PC-9 (cell line): ENCODE measurements at regions of chr7 and their contacts with region 1.

Region 1: GRCh38 chr7:142375666-142376313 is 117.9 kb upstream of the PRSS58 start:
- DNase-seq: peak; percentile 99 to 100
- H3K4me3 ChIP-seq: peak overlapping the region; percentile 8; the same call in 1 of the 2 replicates
- H3K27ac ChIP-seq: peak overlapping the region; percentile 87
- H3K4me1 ChIP-seq: peaks cover 54% of the 10 kb centered on the region
- H3K27me3 ChIP-seq: no peaks in the 10 kb centered on the region
- CTCF ChIP-seq: peak; percentile 97

Region 2: GRCh38 chr7:142323706-142324105 is 52.1 kb before region 1 on chr7:
- CTCF ChIA-PET with region 1: interaction called, 7 read pairs
- POLR2A ChIA-PET with region 1: no interaction called
- intact Hi-C with region 1: loop called (anchors 1 kb)
- DNase-seq: peak; percentile 66 to 85
- H3K4me3 ChIP-seq: no peak overlapping the region
- H3K27ac ChIP-seq: no peak overlapping the region
- H3K4me1 ChIP-seq: peaks cover 13% of the 10 kb centered on the region
- H3K27me3 ChIP-seq: no peaks in the 10 kb centered on the region
- CTCF ChIP-seq: peak; percentile 88

Region 3: DNA sequence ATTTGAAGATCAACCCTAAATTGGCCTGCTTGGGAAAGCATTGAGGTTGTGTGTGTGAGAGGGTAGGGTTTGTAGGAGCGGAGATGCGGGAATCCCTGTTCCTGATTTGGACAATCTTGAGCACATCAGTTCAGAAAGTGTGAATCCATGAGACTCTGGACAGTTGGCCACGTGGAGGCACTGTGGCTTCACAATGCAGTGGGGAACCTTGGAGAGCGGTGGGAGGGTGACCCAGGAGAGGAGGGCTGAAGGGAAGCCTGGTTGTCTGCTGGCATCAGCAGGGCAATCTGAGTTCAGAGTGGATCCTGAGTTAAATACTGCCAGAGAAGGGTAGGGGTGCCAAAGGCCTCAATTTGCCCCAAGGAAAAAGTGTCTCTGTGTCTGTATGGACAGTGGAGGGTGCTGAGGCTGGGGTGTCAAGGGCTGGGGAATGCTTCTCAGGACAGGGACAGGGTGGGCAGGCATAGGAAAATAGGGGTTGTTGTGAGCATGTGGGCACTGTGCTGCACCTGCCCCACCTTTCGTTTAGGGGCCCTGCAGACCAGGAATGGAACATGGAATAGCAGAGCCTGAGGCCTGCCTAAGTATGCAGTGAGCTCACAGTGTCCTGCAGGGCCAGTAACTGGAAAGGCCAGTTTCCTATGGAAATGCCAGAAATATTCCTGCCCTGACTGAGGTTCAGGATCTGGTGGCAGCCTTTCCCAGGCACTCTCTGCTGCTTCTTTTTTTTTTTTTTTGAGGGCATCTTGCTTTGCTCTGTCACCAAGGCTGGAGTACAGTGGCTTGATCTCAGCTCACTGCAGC is 45.0 kb after region 1 on chr7:
- CTCF ChIA-PET with region 1: interaction called, 7 read pairs
- POLR2A ChIA-PET with region 1: interaction called, 12 read pairs
- intact Hi-C with region 1: loop called (anchors 1 kb)
- DNase-seq: peak; percentile 74 to 79
- H3K4me3 ChIP-seq: no peak overlapping the region
- H3K27ac ChIP-seq: 0 out of 2 replicates have a peak overlapping the region, but pooled peaks have one; percentile 22
- H3K4me1 ChIP-seq: peaks cover 9% of the 10 kb centered on the region
- H3K27me3 ChIP-seq: no peaks in the 10 kb centered on the region
- CTCF ChIP-seq: peak; percentile 59; the same call in 1 of the 2 replicates

Region 4: DNA sequence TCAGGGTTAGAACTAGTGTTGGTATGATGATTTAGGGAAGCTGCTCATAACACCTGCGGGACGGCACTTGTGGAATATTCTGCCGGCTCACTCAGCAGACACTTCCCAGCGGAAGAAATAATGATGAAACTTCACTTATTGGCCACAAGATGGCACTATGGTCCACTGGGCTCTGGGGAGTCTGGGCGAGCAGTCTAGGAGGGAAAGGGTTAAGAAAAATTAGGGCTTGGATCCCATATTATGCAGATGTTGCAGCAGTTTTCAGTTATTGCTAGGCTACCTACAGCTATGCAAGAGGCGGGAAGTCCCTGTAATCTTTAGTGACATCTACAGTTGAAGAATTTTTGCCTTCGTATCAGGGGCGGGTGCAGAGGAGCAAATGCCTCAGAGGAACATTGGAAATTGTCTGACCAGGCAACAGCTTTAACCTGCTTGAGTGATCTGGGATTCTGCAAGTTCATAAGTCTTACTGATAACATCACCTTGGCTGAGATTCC is 120.8 kb after region 1 on chr7:
- CTCF ChIA-PET with region 1: interaction called, 7 read pairs
- POLR2A ChIA-PET with region 1: no interaction called
- intact Hi-C with region 1: loop called (anchors 1 kb)
- DNase-seq: peak; percentile 84 to 98
- H3K4me3 ChIP-seq: peak overlapping the region; percentile 22; the same call in 1 of the 2 replicates
- H3K27ac ChIP-seq: peak overlapping the region; percentile 74
- H3K4me1 ChIP-seq: peaks cover 51% of the 10 kb centered on the region
- H3K27me3 ChIP-seq: no peaks in the 10 kb centered on the region
- CTCF ChIP-seq: peak; percentile 95

Region 5: DNA sequence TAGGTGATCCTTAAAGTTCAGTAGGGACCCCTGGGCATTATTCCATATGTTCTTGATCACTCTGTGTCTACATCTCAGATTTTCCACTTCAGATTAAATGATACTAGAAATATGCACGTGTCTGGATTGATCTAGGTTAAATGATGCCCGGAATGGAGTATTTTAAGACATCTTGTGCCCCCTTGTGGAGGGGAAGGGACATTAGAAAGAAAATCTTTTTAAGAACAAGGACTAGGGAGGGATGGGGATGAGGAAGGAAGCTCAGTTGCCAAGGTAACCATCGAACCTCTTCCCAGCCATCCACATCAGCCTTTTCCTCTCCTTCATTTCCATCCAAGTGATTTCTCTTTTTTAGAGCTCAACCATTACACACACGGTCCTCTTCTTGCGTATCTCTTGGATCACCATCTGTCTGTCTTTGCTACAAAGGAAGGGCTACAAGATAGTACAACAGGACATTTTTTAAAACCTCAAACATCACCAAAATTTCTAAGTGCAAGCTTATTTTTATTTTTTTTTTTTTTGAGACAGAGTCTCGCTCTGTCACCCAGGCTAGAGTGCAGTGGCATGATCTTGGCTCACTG is 435.5 kb after region 1 on chr7:
- CTCF ChIA-PET with region 1: interaction called, 4 read pairs
- POLR2A ChIA-PET with region 1: no interaction called
- intact Hi-C with region 1: loop called (anchors 1 kb)
- DNase-seq: peak; percentile 22 to 78
- H3K4me3 ChIP-seq: no peak overlapping the region
- H3K27ac ChIP-seq: peak overlapping the region; percentile 96
- H3K4me1 ChIP-seq: peaks cover 84% of the 10 kb centered on the region
- H3K27me3 ChIP-seq: no peaks in the 10 kb centered on the region
- CTCF ChIP-seq: peak; percentile 95

Region 6: DNA sequence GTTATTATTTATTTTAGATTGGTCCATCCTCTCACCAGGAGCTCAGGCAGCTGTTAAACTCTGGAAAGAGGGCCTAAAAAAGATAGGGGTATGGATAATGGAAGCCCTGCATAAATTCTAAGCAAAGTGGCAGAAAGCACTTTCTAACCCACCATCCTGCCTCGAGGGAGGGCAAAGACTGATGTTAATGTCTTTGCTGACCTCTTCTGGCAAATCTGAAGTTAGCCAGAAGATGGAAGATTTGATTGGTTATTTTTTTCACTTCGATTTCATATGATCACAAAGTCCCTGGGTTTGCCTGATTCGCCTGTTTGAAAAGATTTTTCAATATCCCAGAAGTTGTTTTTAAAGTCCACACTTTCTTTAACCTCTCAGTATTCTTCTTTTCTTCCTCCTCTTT is 626.3 kb after region 1 on chr7:
- CTCF ChIA-PET with region 1: interaction called, 6 read pairs
- POLR2A ChIA-PET with region 1: no interaction called
- intact Hi-C with region 1: loop called (anchors 1 kb)
- DNase-seq: peak in 1 of 2 experiments; percentile 12
- H3K4me3 ChIP-seq: no peak overlapping the region
- H3K27ac ChIP-seq: no peak overlapping the region
- H3K4me1 ChIP-seq: peaks cover 4% of the 10 kb centered on the region; the same call in 1 of the 2 replicates
- H3K27me3 ChIP-seq: no peaks in the 10 kb centered on the region
- CTCF ChIP-seq: peak; percentile 73